Caco-2 (cell line): ENCODE measurements at regions of chr14 and their contacts with region 1.

Region 1: GRCh38 chr14:49767562-49768300 is at the start of gene KLHDC2:
- DNase-seq: peak; percentile 88 to 94
- H3K4me3 ChIP-seq: peak within 1 kb of the TSS; percentile 99
- H3K4me3 Mint-ChIP-seq: peak within 1 kb of the TSS; percentile 79
- H3K27ac Mint-ChIP-seq: peak within 1 kb of the TSS; percentile 79
- H3K4me1 ChIP-seq: peaks cover 35% of the 10 kb centered on the region
- H3K4me1 Mint-ChIP-seq: peaks cover 10% of the 10 kb centered on the region
- H3K27me3 ChIP-seq: no peaks in the 10 kb centered on the region
- H3K27me3 Mint-ChIP-seq: no peaks in the 10 kb centered on the region
- CTCF ChIP-seq: no peak
- total RNA-seq, gene KLHDC2: 76.5 and 89.4 TPM in 2 replicates

Region 2: DNA sequence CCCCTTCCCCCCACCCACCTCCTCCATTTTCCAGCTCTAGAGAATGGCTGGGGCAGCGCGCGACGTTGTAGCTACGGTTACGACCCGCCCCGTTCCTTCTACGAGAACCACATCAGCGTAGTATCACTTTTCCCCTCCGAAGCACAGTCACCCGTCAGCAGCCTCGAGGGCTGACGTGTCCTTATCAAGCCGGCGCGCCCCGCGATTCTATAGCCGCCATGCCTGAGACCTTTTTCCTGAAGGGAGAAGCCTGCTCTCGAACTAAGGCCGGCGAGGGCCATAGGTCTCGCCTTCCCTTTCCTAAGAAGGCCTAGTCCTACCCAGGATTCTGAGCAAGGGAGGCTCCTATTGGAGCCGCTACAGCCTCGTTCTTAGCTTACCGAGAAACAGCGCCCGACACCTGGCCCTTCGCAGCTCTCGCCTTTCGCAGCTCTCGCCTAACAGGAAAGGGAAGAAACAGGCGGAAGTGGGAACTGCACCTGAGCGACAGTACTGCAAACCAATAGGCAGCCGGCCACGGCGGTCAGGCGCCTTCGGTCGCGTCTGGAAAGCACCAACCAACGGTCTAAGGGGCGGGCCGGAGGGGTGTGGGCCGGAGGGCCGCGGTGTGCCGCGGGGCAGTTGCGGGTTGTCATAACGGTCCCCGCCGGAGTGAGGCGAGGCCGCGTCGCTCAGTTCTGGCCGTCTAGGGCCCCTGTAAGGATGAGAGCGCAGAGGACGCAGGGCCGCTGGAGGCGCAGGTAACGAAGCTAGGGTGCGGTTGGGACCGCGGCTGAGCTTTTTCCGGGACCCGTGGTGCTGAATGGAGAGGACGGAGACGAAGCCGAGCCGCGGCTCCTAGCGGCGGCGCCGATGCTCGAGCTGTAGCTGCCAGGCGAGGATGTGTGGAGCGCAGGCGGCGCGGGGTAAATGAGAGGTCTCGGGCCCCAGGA is 147.3 kb before region 1 on chr14 and contains the starts of genes MGAT2 and RPL36AL:
- CTCF ChIA-PET with region 1: interaction called, 3 read pairs
- POLR2A ChIA-PET with region 1: interaction called, 15 read pairs
- intact Hi-C with region 1: no loop called
- DNase-seq: peak; percentile 99
- H3K4me3 ChIP-seq: peak within 1 kb of the TSS; percentile 84
- H3K4me3 Mint-ChIP-seq: peak within 1 kb of the TSS; percentile 91
- H3K27ac Mint-ChIP-seq: peak within 1 kb of the TSS; percentile 93
- H3K4me1 ChIP-seq: peaks cover 27% of the 10 kb centered on the region
- H3K4me1 Mint-ChIP-seq: peaks cover 16% of the 10 kb centered on the region
- H3K27me3 ChIP-seq: no peaks in the 10 kb centered on the region
- H3K27me3 Mint-ChIP-seq: no peaks in the 10 kb centered on the region
- CTCF ChIP-seq: peak in 1 of 2 experiments; percentile 28
- total RNA-seq, gene MGAT2: 42.1 and 47.5 TPM in 2 replicates
- total RNA-seq, gene RPL36AL: 181 and 191 TPM in 2 replicates

Region 3: GRCh38 chr14:49720744-49721143 is 47.0 kb before region 1 on chr14:
- CTCF ChIA-PET with region 1: interaction called, 11 read pairs
- POLR2A ChIA-PET with region 1: interaction called, 14 read pairs
- intact Hi-C with region 1: loop called (anchors 1 kb)
- DNase-seq: no peak
- H3K4me3 ChIP-seq: no peak overlapping the region
- H3K4me3 Mint-ChIP-seq: no peak overlapping the region
- H3K27ac Mint-ChIP-seq: no peak overlapping the region
- H3K4me1 ChIP-seq: no peaks in the 10 kb centered on the region
- H3K4me1 Mint-ChIP-seq: peaks cover 11% of the 10 kb centered on the region
- H3K27me3 ChIP-seq: no peaks in the 10 kb centered on the region
- H3K27me3 Mint-ChIP-seq: no peaks in the 10 kb centered on the region
- CTCF ChIP-seq: no peak

Region 4: DNA sequence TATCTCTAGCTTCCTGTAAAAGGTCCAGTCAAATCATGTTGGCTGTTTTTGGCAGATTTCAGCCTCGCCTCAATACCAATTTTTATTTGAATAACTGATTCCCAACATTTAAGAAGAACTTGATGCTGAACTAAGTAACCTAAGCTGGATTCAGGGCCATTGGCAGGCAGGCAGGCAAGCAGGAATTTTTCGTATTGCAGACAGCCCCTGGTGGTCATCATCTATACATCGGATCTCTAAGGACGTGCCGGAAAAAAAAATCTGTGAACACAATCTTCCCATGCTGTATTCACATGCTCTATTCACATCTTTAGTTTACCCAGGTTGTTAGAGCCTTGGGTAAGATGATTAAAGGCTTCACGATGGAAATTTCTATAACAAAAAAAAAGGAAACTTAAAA is 341.6 kb after region 1 on chr14:
- CTCF ChIA-PET with region 1: no interaction called
- POLR2A ChIA-PET with region 1: no interaction called
- intact Hi-C with region 1: loop called (anchors 10 kb)
- DNase-seq: peak in 1 of 2 experiments; percentile 40
- H3K4me3 ChIP-seq: no peak overlapping the region
- H3K4me3 Mint-ChIP-seq: no peak overlapping the region
- H3K27ac Mint-ChIP-seq: no peak overlapping the region
- H3K4me1 ChIP-seq: peaks cover 3% of the 10 kb centered on the region; the same call in 1 of the 2 replicates
- H3K4me1 Mint-ChIP-seq: no peaks in the 10 kb centered on the region
- H3K27me3 ChIP-seq: no peaks in the 10 kb centered on the region
- H3K27me3 Mint-ChIP-seq: no peaks in the 10 kb centered on the region
- CTCF ChIP-seq: peak; percentile 50 to 57

Region 5: GRCh38 chr14:50272503-50272902 is 504.8 kb after region 1 on chr14:
- CTCF ChIA-PET with region 1: no interaction called
- POLR2A ChIA-PET with region 1: interaction called, 10 read pairs
- intact Hi-C with region 1: no loop called
- DNase-seq: no peak
- H3K4me3 ChIP-seq: no peak overlapping the region
- H3K4me3 Mint-ChIP-seq: no peak overlapping the region
- H3K27ac Mint-ChIP-seq: no peak overlapping the region
- H3K4me1 ChIP-seq: no peaks in the 10 kb centered on the region
- H3K4me1 Mint-ChIP-seq: no peaks in the 10 kb centered on the region
- H3K27me3 ChIP-seq: no peaks in the 10 kb centered on the region
- H3K27me3 Mint-ChIP-seq: no peaks in the 10 kb centered on the region
- CTCF ChIP-seq: no peak